Upper lobe of right lung (tissue), 1 donor: ENCODE measurements at regions of chr16 and their contacts with region 1.

Region 1: DNA sequence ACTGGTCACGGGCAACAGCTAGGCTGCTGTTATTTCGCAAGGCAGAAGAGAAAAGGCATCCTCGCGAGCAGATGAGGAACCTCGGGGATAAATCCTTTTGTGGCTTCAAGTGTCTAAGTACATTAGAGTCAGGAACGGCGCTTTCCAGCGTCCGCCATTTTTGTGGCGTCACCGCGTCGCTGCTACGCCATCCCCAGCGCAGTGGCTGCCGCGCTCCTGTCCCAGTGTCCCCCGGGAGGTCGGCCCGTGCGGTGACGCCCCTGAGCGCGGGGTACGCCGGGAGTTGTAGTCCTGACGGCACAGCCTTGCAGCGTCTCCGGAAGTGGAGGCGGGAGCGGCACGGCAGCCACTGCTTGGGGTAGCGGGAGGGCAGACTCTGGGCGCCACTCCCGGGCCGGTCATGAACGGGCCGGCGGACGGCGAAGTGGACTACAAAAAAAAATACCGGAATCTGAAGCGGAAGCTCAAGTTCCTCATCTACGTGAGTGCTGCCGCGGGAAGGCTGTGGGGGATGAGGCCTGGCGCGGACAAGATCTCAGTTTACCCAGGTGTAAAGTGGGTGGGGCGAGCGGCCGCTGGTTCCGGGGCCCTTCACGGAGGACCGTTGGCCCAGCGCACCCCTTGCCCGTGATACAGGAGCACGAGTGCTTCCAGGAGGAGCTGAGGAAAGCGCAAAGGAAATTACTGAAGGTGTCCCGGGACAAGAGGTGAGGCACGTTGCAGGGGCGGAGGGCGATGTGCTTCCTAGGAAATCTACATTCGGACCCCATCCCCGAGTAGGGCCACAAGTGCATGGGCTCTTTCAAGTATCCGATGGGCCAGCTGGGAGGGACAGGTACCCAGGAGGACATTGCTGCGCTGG is at the start of gene INO80E:
- DNase-seq: peak; percentile 100
- ATAC-seq: peak; percentile 97
- H3K4me3 ChIP-seq: peak within 1 kb of the TSS; percentile 98
- H3K27ac ChIP-seq: peak within 1 kb of the TSS; percentile 97
- H3K4me1 ChIP-seq: peaks cover 23% of the 10 kb centered on the region
- H3K27me3 ChIP-seq: no peaks in the 10 kb centered on the region
- CTCF ChIP-seq: no peak
- total RNA-seq, gene INO80E: 65.3 TPM

Region 2: GRCh38 chr16:29926005-29926710 is 70.0 kb before region 1 on chr16 and contains the start of gene KCTD13:
- intact Hi-C with region 1: loop called (anchors 10 kb)
- DNase-seq: peak; percentile 93
- ATAC-seq: peak; percentile 98
- H3K4me3 ChIP-seq: peak within 1 kb of the TSS; percentile 97
- H3K27ac ChIP-seq: peak within 1 kb of the TSS; percentile 90
- H3K4me1 ChIP-seq: peaks cover 20% of the 10 kb centered on the region
- H3K27me3 ChIP-seq: no peaks in the 10 kb centered on the region
- CTCF ChIP-seq: no peak
- total RNA-seq, gene KCTD13: 23.5 TPM

Region 3: DNA sequence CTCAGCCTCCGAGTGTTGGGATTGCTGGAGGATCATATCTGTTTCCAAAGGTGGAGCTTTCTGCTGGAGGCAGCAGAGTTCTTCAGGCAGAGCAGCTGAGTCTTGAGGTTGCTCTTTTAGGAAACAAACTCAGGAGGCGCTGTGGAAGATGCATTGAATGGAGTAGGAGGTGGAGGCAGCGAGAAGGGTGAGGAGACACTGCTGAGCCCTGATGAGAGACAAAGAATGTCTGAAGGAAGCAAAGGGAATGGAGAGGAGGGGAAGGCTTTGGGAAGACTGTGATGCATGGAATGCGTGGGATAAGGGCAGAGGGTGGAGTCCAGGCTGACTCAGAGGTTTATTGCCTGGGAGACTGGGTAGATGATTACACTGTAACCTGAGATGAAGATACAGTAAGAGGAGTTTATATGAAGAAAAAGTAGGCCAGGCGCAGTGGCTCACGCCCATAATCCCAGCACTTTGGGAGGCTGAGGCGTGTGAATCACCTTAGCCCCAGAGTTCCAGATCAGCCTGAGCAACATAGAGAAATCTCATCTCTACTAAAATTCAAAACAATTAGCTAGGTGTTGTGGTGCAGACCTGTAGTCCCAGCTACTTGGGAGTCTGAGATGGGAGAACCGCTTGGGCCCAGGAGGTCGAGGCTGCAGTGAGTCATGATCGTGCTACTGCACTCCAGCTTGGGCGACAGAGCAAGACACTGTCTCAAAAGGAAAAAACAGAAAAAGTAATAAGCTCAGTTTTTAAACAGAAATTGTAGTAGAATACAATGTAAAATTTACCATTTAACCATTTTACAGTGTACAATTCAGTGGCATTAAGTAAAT is 52.1 kb before region 1 on chr16:
- intact Hi-C with region 1: no loop called
- DNase-seq: no peak
- ATAC-seq: peak; percentile 91
- H3K4me3 ChIP-seq: no peak overlapping the region
- H3K27ac ChIP-seq: no peak overlapping the region
- H3K4me1 ChIP-seq: no peaks in the 10 kb centered on the region
- H3K27me3 ChIP-seq: no peaks in the 10 kb centered on the region
- CTCF ChIP-seq: peak; percentile 9